Heart right ventricle (tissue), 16 donors: ENCODE measurements at regions of chr9 and their contacts with region 1.

Region 1: DNA sequence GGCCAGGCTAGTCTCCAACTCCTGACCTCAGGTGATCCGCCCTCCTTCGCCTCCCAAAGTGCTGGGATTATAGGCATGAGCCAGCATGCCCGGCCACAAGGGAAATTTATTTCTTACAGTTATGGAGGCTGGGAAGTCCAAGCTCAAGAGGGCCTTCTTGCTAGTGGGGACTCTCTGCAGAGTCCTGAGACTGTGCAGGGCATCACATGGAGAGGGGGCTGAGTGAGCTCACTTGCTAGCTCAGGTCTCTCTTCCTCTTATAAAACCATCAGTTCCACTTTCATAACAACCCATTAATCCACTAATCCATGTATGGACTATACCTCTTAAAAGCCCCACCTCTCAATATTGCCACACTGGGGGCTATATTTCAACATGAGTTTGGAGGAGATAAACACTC is 5.1 kb upstream of the SPIN1 start:
- DNase-seq: no peak
- ATAC-seq: no peak
- H3K4me3 ChIP-seq: no peak overlapping the region
- H3K27ac ChIP-seq: no peak overlapping the region
- H3K4me1 ChIP-seq: peaks cover 0 to 14% (median 7%) of the 10 kb centered on the region in 9 donors
- H3K27me3 ChIP-seq: no peaks in the 10 kb centered on the region
- CTCF ChIP-seq: no peak

Region 2: GRCh38 chr9:88310310-88310995 is 72.7 kb before region 1 on chr9:
- intact Hi-C with region 1: loop called in 1 of 10 experiments (anchors 5 kb)
- DNase-seq: no peak
- ATAC-seq: peak in 1 of 8 donors; percentile 19
- H3K4me3 ChIP-seq: no peak overlapping the region
- H3K27ac ChIP-seq: no peak overlapping the region
- H3K4me1 ChIP-seq: peaks cover 0 to 13% (median 0%) of the 10 kb centered on the region in 9 donors
- H3K27me3 ChIP-seq: peaks cover 0 to 7% (median 0%) of the 10 kb centered on the region in 7 donors
- CTCF ChIP-seq: no peak

Region 3: GRCh38 chr9:88418715-88419540 is 35.8 kb after region 1 on chr9:
- intact Hi-C with region 1: no loop called
- DNase-seq: no peak
- ATAC-seq: no peak
- H3K4me3 ChIP-seq: no peak overlapping the region
- H3K27ac ChIP-seq: no peak overlapping the region
- H3K4me1 ChIP-seq: peaks cover 0 to 4% (median 0%) of the 10 kb centered on the region in 9 donors
- H3K27me3 ChIP-seq: no peaks in the 10 kb centered on the region
- CTCF ChIP-seq: no peak